ENCODE measurements at regions of chr19 and their contacts with region 1.

Region 1: GRCh38 chr19:45862564-45863334 is at the start of gene SYMPK:
- DNase-seq: peak; percentile 93 to 99 (median 99)
- ATAC-seq: peak; percentile 99
- H3K4me3 ChIP-seq: peak within 1 kb of the TSS; percentile 95
- H3K4me3 Mint-ChIP-seq: peak within 1 kb of the TSS; percentile 90 to 100 (median 96)
- H3K27ac ChIP-seq: peak within 1 kb of the TSS; percentile 86
- H3K27ac Mint-ChIP-seq: peak within 1 kb of the TSS; percentile 84 to 99 (median 95)
- H3K4me1 ChIP-seq: peaks cover 12 to 15% of the 10 kb centered on the region in 2 donors
- H3K4me1 Mint-ChIP-seq: peaks cover 29 to 37% (median 36%) of the 10 kb centered on the region in 7 donors
- H3K27me3 ChIP-seq: peaks cover 0 to 4% of the 10 kb centered on the region in 2 donors
- H3K27me3 Mint-ChIP-seq: peaks cover 6 to 39% (median 21%) of the 10 kb centered on the region in 5 donors
- total RNA-seq, gene SYMPK: 81.3 to 110 (median 96.4) TPM

Region 2: DNA sequence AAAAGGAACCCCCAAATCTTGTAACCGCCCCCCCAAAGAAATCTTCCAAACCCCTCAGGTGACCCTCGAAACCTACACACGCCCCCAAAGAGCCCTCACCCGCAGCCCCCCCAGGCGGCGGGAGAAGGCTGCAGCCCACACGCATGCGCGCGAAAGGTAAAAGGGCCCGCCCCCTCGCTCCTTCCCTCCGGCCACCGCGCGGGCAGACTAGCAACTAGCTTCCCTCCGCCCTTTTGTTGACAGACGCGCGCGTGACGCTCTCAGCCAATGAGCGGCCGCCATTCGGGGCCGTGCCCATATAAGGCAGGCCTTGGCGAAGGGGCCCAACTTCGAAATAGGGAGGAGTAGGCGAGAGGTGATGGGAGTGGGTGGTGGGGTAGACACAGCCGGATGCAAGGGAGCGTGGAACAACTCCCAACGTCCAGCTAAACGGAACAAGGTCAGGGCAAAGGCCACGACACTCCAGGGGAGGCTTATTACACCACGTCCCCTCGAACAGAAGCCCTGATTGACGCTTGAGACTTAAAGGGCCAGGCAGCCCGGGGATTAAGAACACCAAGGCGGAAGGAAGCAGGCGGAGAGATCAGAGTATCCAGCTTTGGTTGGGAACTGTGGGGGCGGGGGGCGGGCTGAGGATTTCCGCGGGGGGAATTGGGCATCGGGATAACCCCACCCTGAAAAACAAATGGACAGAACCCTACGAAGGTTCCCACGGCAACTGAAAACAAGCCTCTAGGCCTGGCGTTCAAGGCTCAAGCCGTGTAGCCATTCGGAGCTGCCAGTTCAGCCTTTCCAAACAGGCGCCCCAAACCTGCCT is 145.4 kb before region 1 on chr19:
- CTCF ChIA-PET with region 1: no interaction called
- POLR2A ChIA-PET with region 1: interaction called, 5 read pairs
- intact Hi-C with region 1: loop called in 1 of 2 experiments (anchors 1 kb)
- DNase-seq: peak; percentile 92 to 99 (median 98)
- ATAC-seq: peak; percentile 98
- H3K4me3 ChIP-seq: peak overlapping the region; percentile 80
- H3K4me3 Mint-ChIP-seq: peak overlapping the region; percentile 89 to 99 (median 95)
- H3K27ac ChIP-seq: peak overlapping the region; percentile 89
- H3K27ac Mint-ChIP-seq: peak overlapping the region; percentile 88 to 97 (median 96)
- H3K4me1 ChIP-seq: peaks cover 17 to 26% of the 10 kb centered on the region in 2 donors
- H3K4me1 Mint-ChIP-seq: peaks cover 26 to 55% (median 38%) of the 10 kb centered on the region in 7 donors
- H3K27me3 ChIP-seq: no peaks in the 10 kb centered on the region
- H3K27me3 Mint-ChIP-seq: no peaks in the 10 kb centered on the region

Region 3: DNA sequence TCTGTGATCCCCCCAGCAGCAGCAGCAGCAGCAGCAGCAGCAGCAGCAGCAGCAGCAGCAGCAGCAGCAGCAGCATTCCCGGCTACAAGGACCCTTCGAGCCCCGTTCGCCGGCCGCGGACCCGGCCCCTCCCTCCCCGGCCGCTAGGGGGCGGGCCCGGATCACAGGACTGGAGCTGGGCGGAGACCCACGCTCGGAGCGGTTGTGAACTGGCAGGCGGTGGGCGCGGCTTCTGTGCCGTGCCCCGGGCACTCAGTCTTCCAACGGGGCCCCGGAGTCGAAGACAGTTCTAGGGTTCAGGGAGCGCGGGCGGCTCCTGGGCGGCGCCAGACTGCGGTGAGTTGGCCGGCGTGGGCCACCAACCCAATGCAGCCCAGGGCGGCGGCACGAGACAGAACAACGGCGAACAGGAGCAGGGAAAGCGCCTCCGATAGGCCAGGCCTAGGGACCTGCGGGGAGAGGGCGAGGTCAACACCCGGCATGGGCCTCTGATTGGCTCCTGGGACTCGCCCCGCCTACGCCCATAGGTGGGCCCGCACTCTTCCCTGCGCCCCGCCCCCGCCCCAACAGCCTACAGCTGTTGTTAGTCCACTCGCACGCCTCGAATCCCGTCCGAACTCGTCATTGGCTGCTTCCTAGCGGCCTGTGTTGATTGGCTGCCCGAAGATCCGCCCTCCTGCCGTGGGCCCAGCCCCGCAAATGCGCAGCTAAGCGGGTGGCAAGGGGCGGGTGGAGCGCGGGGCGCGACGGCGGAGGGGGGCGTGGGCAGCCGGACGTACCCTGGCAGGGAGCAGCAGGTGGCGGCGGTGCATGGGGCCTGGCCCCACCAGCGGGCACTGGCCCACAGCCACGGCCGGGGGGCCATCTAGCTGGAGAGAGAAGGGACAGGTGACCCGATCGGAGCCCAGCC is 92.3 kb before region 1 on chr19:
- CTCF ChIA-PET with region 1: interaction called, 5 read pairs
- POLR2A ChIA-PET with region 1: interaction called, 3 read pairs
- intact Hi-C with region 1: loop called (anchors 1 to 5 kb)
- DNase-seq: peak; percentile 84 to 97 (median 93)
- ATAC-seq: peak; percentile 85
- H3K4me3 ChIP-seq: peak overlapping the region; percentile 95
- H3K4me3 Mint-ChIP-seq: peak overlapping the region; percentile 81 to 92 (median 88)
- H3K27ac ChIP-seq: peak overlapping the region; percentile 64
- H3K27ac Mint-ChIP-seq: peak overlapping the region in 7 of 9 donors; percentile 43 to 93 (median 85)
- H3K4me1 ChIP-seq: peaks cover 9 to 13% of the 10 kb centered on the region in 2 donors
- H3K4me1 Mint-ChIP-seq: peaks cover 0 to 16% (median 8%) of the 10 kb centered on the region in 7 donors
- H3K27me3 ChIP-seq: no peaks in the 10 kb centered on the region
- H3K27me3 Mint-ChIP-seq: peaks cover 0 to 28% (median 4%) of the 10 kb centered on the region in 5 donors

Region 4: GRCh38 chr19:45817010-45817724 is 45.6 kb before region 1 on chr19:
- CTCF ChIA-PET with region 1: interaction called, 6 read pairs
- POLR2A ChIA-PET with region 1: no interaction called
- intact Hi-C with region 1: loop called (anchors 1 to 5 kb)
- DNase-seq: peak; percentile 88 to 96 (median 93)
- ATAC-seq: peak; percentile 100
- H3K4me3 ChIP-seq: no peak overlapping the region
- H3K4me3 Mint-ChIP-seq: peak overlapping the region in 5 of 10 donors; percentile 16 to 54 (median 45)
- H3K27ac ChIP-seq: no peak overlapping the region
- H3K27ac Mint-ChIP-seq: peak overlapping the region in 7 of 9 donors; percentile 25 to 93 (median 42)
- H3K4me1 ChIP-seq: peaks cover 0 to 4% of the 10 kb centered on the region in 2 donors
- H3K4me1 Mint-ChIP-seq: peaks cover 0 to 7% (median 5%) of the 10 kb centered on the region in 7 donors
- H3K27me3 ChIP-seq: no peaks in the 10 kb centered on the region
- H3K27me3 Mint-ChIP-seq: peaks cover 0 to 20% (median 17%) of the 10 kb centered on the region in 5 donors

Region 5: DNA sequence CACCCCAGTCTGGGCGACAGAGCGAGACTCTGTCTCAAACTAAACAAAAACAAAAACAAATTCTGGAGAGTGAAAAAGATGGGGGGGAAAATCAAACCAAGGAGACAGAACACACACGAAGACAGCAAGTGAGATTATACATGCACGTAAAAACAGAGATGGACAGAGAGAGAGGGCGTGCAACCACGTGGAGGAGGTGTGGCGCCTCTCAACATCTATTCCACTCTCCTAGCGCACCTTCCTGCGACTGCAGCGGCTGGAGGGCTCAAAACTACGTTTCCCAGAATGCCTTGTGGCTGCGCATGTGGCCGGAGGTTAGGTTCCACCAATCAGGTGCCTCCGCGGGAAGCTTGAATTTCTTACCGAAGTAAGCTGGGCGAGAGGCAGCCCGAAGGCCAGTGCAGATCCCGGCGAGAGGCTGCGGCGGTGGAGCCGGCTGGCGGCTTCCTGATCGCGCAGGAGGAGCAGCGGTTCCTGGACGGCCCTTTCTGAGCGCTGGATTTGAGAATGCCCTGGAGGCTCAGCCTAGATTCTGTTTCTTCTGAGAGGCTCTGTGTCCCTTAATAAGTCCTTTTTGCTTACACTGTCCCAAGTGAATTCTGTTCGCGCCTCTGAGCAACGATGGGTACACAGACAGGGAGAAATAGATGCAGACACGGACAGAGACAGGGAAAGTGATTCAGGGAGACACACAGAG is 65.0 kb after region 1 on chr19:
- CTCF ChIA-PET with region 1: no interaction called
- POLR2A ChIA-PET with region 1: no interaction called
- intact Hi-C with region 1: loop called (anchors 1 kb)
- DNase-seq: peak; percentile 66 to 89 (median 87)
- ATAC-seq: peak; percentile 99
- H3K4me3 ChIP-seq: no peak overlapping the region
- H3K4me3 Mint-ChIP-seq: peak overlapping the region in 7 of 10 donors; percentile 10 to 86 (median 55)
- H3K27ac ChIP-seq: no peak overlapping the region
- H3K27ac Mint-ChIP-seq: peak overlapping the region in 4 of 9 donors; percentile 28 to 60 (median 42)
- H3K4me1 ChIP-seq: peaks cover 4 to 5% of the 10 kb centered on the region in 2 donors
- H3K4me1 Mint-ChIP-seq: peaks cover 4 to 23% (median 6%) of the 10 kb centered on the region in 7 donors
- H3K27me3 ChIP-seq: no peaks in the 10 kb centered on the region
- H3K27me3 Mint-ChIP-seq: peaks cover 0 to 15% (median 9%) of the 10 kb centered on the region in 5 donors

Region 6: GRCh38 chr19:46850228-46851203 is 987.8 kb after region 1 on chr19 and contains the start of gene AP2S1:
- CTCF ChIA-PET with region 1: no interaction called
- POLR2A ChIA-PET with region 1: no interaction called
- intact Hi-C with region 1: loop called in 1 of 2 experiments (anchors 10 kb)
- DNase-seq: peak; percentile 73 to 98 (median 93)
- ATAC-seq: peak; percentile 97
- H3K4me3 ChIP-seq: peak within 1 kb of the TSS; percentile 89
- H3K4me3 Mint-ChIP-seq: peak within 1 kb of the TSS; percentile 87 to 99 (median 93)
- H3K27ac ChIP-seq: peak within 1 kb of the TSS; percentile 79
- H3K27ac Mint-ChIP-seq: peak within 1 kb of the TSS; percentile 68 to 96 (median 83)
- H3K4me1 ChIP-seq: peaks cover 9 to 12% of the 10 kb centered on the region in 2 donors
- H3K4me1 Mint-ChIP-seq: peaks cover 20 to 34% (median 29%) of the 10 kb centered on the region in 7 donors
- H3K27me3 ChIP-seq: no peaks in the 10 kb centered on the region
- H3K27me3 Mint-ChIP-seq: peaks cover 0 to 3% (median 0%) of the 10 kb centered on the region in 5 donors
- total RNA-seq, gene AP2S1: 34.4 to 116 (median 46.5) TPM